ENCODE measurements at regions of chr15 and their contacts with region 1.

Region 1: GRCh38 chr15:98421419-98422129 is 226.8 kb upstream of the IGF1R start:
- DNase-seq: peak; percentile 70

Region 2: DNA sequence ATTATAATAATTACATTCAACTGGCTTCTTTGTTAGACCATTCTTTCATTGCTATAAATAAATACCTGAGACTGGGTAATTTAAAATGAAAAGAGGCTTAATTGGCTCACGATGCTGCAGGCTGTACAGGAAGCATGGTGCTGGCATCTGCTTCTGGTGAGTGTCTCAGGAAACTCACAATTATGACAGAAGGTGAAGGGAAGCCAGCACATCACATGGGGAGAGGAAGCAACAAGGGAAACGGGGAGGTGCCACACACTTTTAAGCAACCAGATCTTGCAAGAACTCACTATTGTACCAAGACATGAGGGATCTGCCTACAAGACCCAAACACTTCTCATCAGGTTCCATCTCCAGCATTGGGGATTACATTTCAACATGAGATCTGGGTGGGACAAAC is 874.2 kb before region 1 on chr15:
- in situ Hi-C with region 1: no loop called
- DNase-seq: peak; percentile 33

Region 3: GRCh38 chr15:98315971-98316370 is 105.6 kb before region 1 on chr15:
- in situ Hi-C with region 1: loop called (anchors 5 kb)
- DNase-seq: no peak

Measured in KBM-7 (cell line).